ENCODE measurements at regions of chr4 and their contacts with region 1.

Region 1: DNA sequence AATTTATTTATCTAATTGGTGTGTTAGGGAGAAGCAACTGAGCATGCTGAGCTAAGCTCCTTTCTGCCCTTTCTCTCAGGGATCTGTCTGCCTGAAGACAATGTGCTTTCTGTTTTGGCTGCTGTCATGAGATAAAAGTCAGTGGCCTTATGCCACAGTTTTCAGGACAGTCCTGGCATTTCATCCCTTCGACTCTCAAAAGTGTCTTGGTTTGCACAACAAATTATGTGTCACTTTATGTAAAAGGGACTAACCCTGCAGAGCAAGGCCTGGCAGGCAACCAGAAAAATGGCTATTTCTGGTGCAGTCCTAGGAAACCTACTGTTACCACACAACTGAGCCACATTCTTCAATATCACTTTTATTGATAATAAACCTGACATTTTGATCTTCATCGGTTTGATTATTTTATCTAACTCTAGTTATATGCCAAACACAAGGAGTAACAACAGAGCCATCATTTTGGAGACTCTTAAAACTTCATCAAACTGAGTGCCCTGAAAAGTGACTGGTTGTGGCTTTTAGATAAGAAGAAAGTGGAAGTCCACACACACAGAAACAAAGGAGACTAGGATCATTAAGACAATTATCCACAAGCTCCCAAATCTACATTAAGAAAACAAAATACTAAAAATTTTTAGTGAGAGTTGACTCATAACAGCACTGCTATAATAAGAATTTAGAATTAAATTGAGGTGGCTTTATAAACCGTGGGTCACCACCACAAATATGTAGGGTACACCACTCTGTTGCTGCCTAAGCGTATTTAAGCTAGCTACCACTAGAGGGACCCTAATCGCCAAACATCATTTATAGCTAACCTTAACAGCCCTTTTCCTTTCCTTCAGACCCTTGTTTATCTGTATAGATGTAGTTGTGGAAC is 95.9 kb upstream of the PTPN13 start:
- DNase-seq: peak; percentile 15
- H3K4me3 ChIP-seq: no peak overlapping the region
- H3K27ac ChIP-seq: no peak overlapping the region
- H3K4me1 ChIP-seq: peaks cover 3% of the 10 kb centered on the region
- H3K27me3 ChIP-seq: no peaks in the 10 kb centered on the region
- CTCF ChIP-seq: peak; percentile 38 to 80 (median 72)
- POLR2A ChIP-seq: no peak

Region 2: GRCh38 chr4:85741921-85742591 is 756.2 kb before region 1 on chr4:
- intact Hi-C with region 1: no loop called
- DNase-seq: no peak
- H3K4me3 ChIP-seq: no peak overlapping the region
- H3K27ac ChIP-seq: no peak overlapping the region
- H3K4me1 ChIP-seq: no peaks in the 10 kb centered on the region
- H3K27me3 ChIP-seq: no peaks in the 10 kb centered on the region
- CTCF ChIP-seq: no peak
- POLR2A ChIP-seq: no peak

Region 3: GRCh38 chr4:86586160-86586572 is 87.9 kb after region 1 on chr4:
- intact Hi-C with region 1: loop called (anchors 5 kb)
- DNase-seq: no peak
- H3K4me3 ChIP-seq: no peak overlapping the region
- H3K27ac ChIP-seq: peak overlapping the region in 1 of 2 donors; percentile 52
- H3K4me1 ChIP-seq: peaks cover 10% of the 10 kb centered on the region
- H3K27me3 ChIP-seq: no peaks in the 10 kb centered on the region
- CTCF ChIP-seq: no peak
- POLR2A ChIP-seq: no peak

Measured in prostate gland (tissue), 2 donors.